ENCODE measurements at regions of chr9 and their contacts with region 1.

Region 1: GRCh38 chr9:115204904-115205453 is 87.0 kb upstream of the TNC start:
- DNase-seq: no peak
- H3K4me3 ChIP-seq: no peak overlapping the region
- H3K27ac ChIP-seq: peak overlapping the region in 2 of 4 donors; percentile 57 to 77
- H3K4me1 ChIP-seq: peaks cover 0 to 52% (median 39%) of the 10 kb centered on the region in 4 donors
- H3K27me3 ChIP-seq: no peaks in the 10 kb centered on the region
- CTCF ChIP-seq: no peak
- EP300 ChIP-seq: peak in 1 of 4 donors; percentile 44
- POLR2A ChIP-seq: no peak

Region 2: DNA sequence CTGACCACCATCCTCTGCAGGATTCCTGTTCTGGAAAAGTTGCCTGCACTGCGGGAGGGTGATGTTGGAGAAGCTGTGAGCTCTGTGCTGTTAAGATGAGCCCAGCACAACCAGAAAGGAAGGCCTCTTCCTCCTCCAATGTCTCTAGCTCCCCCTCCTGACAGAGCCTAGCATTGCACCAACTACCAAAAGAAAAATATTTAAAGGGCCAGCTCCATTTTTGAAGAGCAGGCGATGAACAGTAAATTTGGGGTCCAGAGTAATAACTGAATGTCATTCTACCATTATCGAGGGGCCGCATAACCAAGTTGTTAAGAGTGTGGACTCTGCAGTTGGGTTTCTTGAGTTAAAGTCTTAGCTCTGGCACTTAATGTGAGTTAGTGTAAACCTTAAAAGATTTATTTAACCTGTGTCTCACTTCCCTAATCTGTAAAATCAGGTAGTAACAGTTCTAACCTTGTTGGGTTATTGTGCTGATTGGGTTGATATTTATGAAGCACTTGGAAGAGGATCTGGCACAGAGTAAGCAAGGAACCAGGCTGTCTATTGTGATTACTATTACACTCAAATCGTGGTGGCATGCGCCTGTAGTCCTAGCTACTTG is 551.3 kb before region 1 on chr9:
- intact Hi-C with region 1: no loop called
- DNase-seq: peak; percentile 86
- H3K4me3 ChIP-seq: no peak overlapping the region
- H3K27ac ChIP-seq: peak overlapping the region in 1 of 4 donors; percentile 39
- H3K4me1 ChIP-seq: peaks cover 0 to 8% (median 5%) of the 10 kb centered on the region in 4 donors
- H3K27me3 ChIP-seq: no peaks in the 10 kb centered on the region
- CTCF ChIP-seq: peak; percentile 73 to 91 (median 86)
- EP300 ChIP-seq: no peak
- POLR2A ChIP-seq: no peak

Region 3: DNA sequence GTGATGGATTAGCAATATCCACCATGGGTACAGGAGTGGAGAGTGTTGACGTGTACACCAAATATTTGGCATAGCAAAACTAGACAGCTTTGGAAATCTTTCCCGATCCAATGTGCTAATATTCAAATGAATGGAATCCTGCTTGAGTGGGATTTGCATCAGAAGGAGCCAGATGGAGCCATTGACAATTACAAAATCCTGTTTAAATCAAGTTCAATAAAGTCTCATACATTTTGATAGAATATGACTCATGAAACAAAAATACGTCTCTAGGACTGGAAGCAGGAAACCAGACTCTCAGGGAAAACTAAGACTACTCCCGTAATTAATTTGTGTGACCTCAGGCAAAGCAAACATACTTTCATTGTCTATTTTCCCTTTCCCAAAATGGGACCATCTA is 100.1 kb before region 1 on chr9:
- intact Hi-C with region 1: loop called (anchors 5 kb)
- DNase-seq: no peak
- H3K4me3 ChIP-seq: no peak overlapping the region
- H3K27ac ChIP-seq: peak overlapping the region in 3 of 4 donors; percentile 69 to 97 (median 97)
- H3K4me1 ChIP-seq: peaks cover 0 to 90% (median 69%) of the 10 kb centered on the region in 4 donors
- H3K27me3 ChIP-seq: no peaks in the 10 kb centered on the region
- CTCF ChIP-seq: no peak
- EP300 ChIP-seq: no peak
- POLR2A ChIP-seq: no peak

Region 4: DNA sequence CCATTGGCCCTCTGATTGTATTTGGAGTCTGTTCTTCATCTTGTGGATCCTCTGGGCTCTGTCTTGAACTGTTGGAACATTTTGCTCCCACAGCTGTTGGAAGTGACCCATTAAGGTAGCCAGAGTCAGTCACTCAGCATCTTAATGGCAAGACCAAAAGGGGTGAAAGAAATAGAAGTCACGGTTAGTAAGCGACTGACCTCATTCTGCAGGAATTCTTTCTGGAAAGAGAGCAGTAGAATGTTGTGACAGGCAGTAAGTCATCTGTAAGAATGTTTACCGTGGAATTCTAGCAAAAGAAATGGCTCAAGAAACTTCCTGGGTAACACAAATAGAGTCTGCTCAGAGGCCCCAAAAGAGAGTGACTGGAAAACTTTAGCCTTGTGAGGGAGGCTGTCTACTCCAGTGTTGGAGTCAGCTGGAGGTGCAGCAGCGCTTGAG is 58.4 kb before region 1 on chr9:
- intact Hi-C with region 1: loop called (anchors 2 kb)
- DNase-seq: peak; percentile 87
- H3K4me3 ChIP-seq: no peak overlapping the region
- H3K27ac ChIP-seq: peak overlapping the region; percentile 85 to 90 (median 88)
- H3K4me1 ChIP-seq: peaks cover 0 to 42% (median 38%) of the 10 kb centered on the region in 4 donors
- H3K27me3 ChIP-seq: no peaks in the 10 kb centered on the region
- CTCF ChIP-seq: no peak
- EP300 ChIP-seq: peak; percentile 85 to 99 (median 98)
- POLR2A ChIP-seq: no peak

Region 5: GRCh38 chr9:115157245-115157674 is 47.7 kb before region 1 on chr9:
- intact Hi-C with region 1: loop called (anchors 2 kb)
- DNase-seq: peak; percentile 66
- H3K4me3 ChIP-seq: no peak overlapping the region
- H3K27ac ChIP-seq: peak overlapping the region; percentile 69 to 85 (median 78)
- H3K4me1 ChIP-seq: peaks cover 0 to 54% (median 46%) of the 10 kb centered on the region in 4 donors
- H3K27me3 ChIP-seq: no peaks in the 10 kb centered on the region
- CTCF ChIP-seq: no peak
- EP300 ChIP-seq: peak in 2 of 4 donors; percentile 28 to 40
- POLR2A ChIP-seq: no peak

Region 6: DNA sequence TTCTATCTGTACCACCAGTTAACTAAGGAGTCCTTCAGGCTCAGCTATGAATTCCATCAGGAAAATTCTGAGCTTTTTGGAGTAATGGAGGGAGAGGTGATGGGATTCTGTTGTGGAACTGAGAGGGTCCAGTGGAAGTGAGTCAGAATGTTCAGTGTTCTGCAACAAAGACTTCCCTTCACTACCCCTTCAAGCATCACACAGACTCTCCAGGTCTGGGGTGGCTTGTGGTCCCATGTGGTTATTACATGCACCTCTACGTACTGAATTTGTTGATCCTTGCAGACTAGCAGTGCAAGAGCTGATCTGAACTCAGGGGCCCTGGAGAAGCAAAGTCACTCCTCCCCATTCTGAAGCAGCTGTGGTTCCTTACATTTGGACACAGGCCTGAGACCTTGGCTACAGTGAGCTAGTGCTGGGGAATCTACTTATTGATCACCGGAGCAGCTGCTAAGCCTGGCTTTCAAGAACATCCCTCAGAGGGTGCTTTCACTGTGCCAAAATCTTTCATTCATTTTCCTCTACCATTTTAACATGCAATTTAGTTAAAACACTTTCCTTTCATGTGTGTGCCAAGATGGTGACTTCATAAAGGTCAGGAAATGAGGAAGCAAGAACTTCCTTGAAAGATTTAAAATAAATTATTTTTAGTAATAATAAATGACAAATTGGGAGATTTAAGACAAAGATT is 12.0 kb before region 1 on chr9:
- intact Hi-C with region 1: no loop called
- DNase-seq: no peak
- H3K4me3 ChIP-seq: no peak overlapping the region
- H3K27ac ChIP-seq: no peak overlapping the region
- H3K4me1 ChIP-seq: peaks cover 0 to 20% (median 16%) of the 10 kb centered on the region in 4 donors
- H3K27me3 ChIP-seq: no peaks in the 10 kb centered on the region
- CTCF ChIP-seq: no peak
- EP300 ChIP-seq: no peak
- POLR2A ChIP-seq: no peak

Region 7: GRCh38 chr9:116450378-116451139 is 1245.6 kb after region 1 on chr9:
- intact Hi-C with region 1: no loop called
- DNase-seq: no peak
- H3K4me3 ChIP-seq: no peak overlapping the region
- H3K27ac ChIP-seq: peak overlapping the region in 2 of 4 donors; percentile 51
- H3K4me1 ChIP-seq: peaks cover 0 to 35% (median 9%) of the 10 kb centered on the region in 4 donors
- H3K27me3 ChIP-seq: no peaks in the 10 kb centered on the region
- CTCF ChIP-seq: no peak
- EP300 ChIP-seq: no peak
- POLR2A ChIP-seq: no peak